ENCODE measurements at regions of chr17 and their contacts with region 1.

Region 1: GRCh38 chr17:40532520-40533204 is 31.2 kb upstream of the TNS4 start:
- DNase-seq: no peak
- ATAC-seq: peak; percentile 30

Region 2: DNA sequence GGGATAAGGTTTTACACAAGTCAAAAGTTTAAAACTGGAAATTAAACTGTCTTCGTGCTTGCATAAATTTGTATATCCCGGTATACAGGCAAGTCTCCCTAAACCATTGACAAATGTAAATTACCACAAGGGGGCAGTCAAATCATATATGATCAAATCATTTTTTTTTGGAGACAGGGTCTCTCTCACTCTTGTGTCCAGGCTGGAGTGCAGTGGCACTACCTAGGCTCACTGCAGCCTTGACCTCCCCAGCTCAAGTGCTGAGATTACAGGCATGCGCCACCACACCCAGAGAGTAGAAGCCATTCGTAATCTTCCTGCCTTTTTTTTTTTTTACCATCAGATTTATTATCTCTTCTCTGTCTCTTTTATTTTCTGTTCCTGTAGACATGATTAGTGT is 133.5 kb before region 1 on chr17:
- intact Hi-C with region 1: loop called (anchors 1 kb)
- DNase-seq: no peak
- ATAC-seq: peak; percentile 28

Region 3: DNA sequence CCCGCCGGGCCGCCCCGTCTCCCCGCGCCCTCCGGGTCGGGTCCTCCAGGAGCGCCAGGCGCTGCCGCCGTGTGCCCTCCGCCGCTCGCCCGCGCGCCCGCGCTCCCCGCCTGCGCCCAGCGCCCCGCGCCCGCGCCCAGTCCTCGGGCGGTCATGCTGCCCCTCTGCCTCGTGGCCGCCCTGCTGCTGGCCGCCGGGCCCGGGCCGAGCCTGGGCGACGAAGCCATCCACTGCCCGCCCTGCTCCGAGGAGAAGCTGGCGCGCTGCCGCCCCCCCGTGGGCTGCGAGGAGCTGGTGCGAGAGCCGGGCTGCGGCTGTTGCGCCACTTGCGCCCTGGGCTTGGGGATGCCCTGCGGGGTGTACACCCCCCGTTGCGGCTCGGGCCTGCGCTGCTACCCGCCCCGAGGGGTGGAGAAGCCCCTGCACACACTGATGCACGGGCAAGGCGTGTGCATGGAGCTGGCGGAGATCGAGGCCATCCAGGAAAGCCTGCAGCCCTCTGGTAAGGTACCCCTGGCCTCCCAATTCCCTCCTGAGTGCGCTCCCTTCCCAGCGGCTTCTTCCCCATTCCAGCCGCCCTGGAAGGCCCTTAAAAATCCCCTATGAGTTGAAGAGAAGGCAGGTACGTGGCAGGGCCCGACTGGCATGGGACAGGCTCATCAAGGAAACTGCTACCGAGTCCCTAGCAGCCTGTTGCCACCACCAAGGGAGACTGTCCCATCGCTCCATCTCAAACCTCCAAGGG is 88.9 kb before region 1 on chr17:
- intact Hi-C with region 1: loop called (anchors 1 kb)
- DNase-seq: peak; percentile 92
- ATAC-seq: peak; percentile 51

Region 4: GRCh38 chr17:40499551-40500174 is 33.0 kb before region 1 on chr17:
- intact Hi-C with region 1: loop called (anchors 1 kb)
- DNase-seq: peak; percentile 92
- ATAC-seq: peak; percentile 95

Region 5: GRCh38 chr17:40582328-40582901 is 49.8 kb after region 1 on chr17:
- intact Hi-C with region 1: no loop called
- DNase-seq: peak; percentile 76
- ATAC-seq: peak; percentile 42

Measured in Right ventricle myocardium inferior (tissue), 1 donor.